T-cell (primary cell): ENCODE measurements at regions of chr16 and their contacts with region 1.

Region 1: GRCh38 chr16:89909777-89910716 is 8.6 kb upstream of the MC1R start:
- DNase-seq: peak; percentile 22 to 79 (median 59)
- ATAC-seq: peak; percentile 74 to 80 (median 77)
- H3K4me3 ChIP-seq: no peak overlapping the region
- H3K4me3 Mint-ChIP-seq: no peak overlapping the region
- H3K27ac ChIP-seq: no peak overlapping the region
- H3K27ac Mint-ChIP-seq: no peak overlapping the region
- H3K4me1 ChIP-seq: peaks cover 0 to 17% of the 10 kb centered on the region in 2 experiments
- H3K4me1 Mint-ChIP-seq: peaks cover 0 to 10% (median 5%) of the 10 kb centered on the region in 3 donors
- H3K27me3 ChIP-seq: peaks cover 0 to 3% of the 10 kb centered on the region in 2 experiments
- H3K27me3 Mint-ChIP-seq: no peaks in the 10 kb centered on the region

Region 2: DNA sequence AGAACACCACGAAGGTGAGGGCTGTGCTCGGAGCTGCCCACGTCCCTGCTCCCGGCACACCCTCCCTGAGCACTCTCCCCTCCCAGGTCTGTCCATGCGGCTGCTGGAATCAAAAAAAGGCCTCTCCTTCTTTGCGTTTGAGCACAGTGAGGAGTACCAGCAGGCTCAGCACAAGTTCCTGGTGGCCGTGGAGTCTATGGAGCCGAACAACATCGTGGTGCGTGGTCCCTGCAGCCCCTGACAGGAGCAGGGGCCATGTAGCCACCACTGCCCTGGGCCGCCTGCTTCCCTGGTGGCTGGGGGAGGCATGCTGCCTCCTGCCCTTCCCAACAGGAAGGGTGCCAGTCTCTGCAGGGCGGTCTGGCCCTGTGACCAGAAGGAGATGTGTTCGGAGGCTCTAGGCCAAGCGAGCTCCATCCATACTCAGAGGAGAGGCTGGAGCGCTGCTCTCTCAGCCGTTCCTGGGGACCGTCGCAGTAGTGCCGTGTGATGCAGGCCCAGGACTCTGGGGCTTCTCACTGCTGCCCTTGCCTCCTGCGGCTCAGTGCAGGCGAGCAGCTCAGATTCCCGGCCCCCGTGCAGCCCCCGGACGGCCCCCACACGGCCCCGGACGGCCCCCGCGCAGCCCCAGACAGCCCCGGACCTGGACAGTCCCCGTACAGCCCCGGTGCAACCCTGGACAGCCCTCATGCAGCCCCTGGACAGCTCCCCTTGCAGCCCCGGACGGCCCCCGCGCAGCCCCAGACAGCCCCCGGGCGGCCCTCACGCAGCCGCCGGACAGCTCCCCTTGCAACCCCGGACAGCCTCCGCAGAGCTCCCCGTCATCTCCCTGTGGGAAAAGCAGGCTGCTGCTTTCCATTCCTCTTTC is 16.2 kb before region 1 on chr16:
- CTCF ChIA-PET with region 1: no interaction called
- POLR2A ChIA-PET with region 1: no interaction called
- DNase-seq: no peak
- ATAC-seq: peak in 1 of 4 experiments; percentile 26
- H3K4me3 ChIP-seq: no peak overlapping the region
- H3K4me3 Mint-ChIP-seq: no peak overlapping the region
- H3K27ac ChIP-seq: no peak overlapping the region
- H3K27ac Mint-ChIP-seq: no peak overlapping the region
- H3K4me1 ChIP-seq: peaks cover 0 to 9% of the 10 kb centered on the region in 2 experiments
- H3K4me1 Mint-ChIP-seq: peaks cover 0 to 7% (median 6%) of the 10 kb centered on the region in 3 donors
- H3K27me3 ChIP-seq: no peaks in the 10 kb centered on the region
- H3K27me3 Mint-ChIP-seq: no peaks in the 10 kb centered on the region

Region 3: DNA sequence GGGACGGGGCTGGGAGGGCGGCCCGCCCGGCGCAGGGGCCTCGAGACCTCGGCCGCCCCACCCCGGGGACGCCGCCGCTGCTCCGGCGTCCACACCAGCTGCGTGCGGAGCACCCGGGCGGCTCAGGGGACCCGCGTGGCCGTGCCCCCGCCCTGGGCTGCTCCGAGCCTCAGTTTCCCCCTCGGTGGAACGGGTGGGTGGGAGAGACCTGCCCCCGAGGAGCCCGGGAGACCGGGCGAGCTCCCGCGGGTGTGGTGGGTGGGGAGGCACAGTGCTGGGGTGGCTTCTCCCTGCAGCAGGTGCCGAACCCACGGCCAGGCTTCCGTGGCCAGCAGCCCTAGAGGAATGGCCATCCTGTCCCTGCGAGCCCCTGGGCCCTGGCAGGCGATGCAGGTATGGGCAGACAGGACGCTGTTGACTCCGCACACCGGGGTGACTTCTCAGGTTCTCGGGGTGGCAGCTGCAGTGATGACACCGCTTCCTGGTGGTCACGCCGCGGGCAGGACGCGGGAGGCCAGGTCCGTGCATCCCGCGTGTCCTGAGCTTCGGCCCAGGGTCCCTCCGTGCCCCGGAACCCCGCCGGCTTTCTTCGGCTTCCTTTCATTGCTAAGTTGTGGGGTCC is 39.2 kb after region 1 on chr16:
- CTCF ChIA-PET with region 1: interaction called in 1 of 2 experiments, 11 read pairs
- POLR2A ChIA-PET with region 1: no interaction called
- DNase-seq: no peak
- ATAC-seq: no peak
- H3K4me3 ChIP-seq: peak overlapping the region; percentile 34 to 47
- H3K4me3 Mint-ChIP-seq: peak overlapping the region; percentile 76 to 84 (median 80)
- H3K27ac ChIP-seq: no peak overlapping the region
- H3K27ac Mint-ChIP-seq: peak overlapping the region in 1 of 2 donors; percentile 11
- H3K4me1 ChIP-seq: peaks cover 3 to 22% of the 10 kb centered on the region in 2 experiments
- H3K4me1 Mint-ChIP-seq: peaks cover 10 to 28% (median 15%) of the 10 kb centered on the region in 3 donors
- H3K27me3 ChIP-seq: peaks cover 2 to 37% of the 10 kb centered on the region in 2 experiments
- H3K27me3 Mint-ChIP-seq: peaks cover 16 to 20% of the 10 kb centered on the region in 2 donors